ENCODE measurements at regions of chr19 and their contacts with region 1.

Region 1: GRCh38 chr19:488505-489417 is 7.5 kb upstream of the MADCAM1 start:
- DNase-seq: peak; percentile 97
- H3K4me3 Mint-ChIP-seq: peak overlapping the region; percentile 86
- H3K27ac Mint-ChIP-seq: peak overlapping the region; percentile 94
- H3K4me1 Mint-ChIP-seq: peaks cover 7% of the 10 kb centered on the region
- H3K27me3 Mint-ChIP-seq: peaks cover 5% of the 10 kb centered on the region

Region 2: DNA sequence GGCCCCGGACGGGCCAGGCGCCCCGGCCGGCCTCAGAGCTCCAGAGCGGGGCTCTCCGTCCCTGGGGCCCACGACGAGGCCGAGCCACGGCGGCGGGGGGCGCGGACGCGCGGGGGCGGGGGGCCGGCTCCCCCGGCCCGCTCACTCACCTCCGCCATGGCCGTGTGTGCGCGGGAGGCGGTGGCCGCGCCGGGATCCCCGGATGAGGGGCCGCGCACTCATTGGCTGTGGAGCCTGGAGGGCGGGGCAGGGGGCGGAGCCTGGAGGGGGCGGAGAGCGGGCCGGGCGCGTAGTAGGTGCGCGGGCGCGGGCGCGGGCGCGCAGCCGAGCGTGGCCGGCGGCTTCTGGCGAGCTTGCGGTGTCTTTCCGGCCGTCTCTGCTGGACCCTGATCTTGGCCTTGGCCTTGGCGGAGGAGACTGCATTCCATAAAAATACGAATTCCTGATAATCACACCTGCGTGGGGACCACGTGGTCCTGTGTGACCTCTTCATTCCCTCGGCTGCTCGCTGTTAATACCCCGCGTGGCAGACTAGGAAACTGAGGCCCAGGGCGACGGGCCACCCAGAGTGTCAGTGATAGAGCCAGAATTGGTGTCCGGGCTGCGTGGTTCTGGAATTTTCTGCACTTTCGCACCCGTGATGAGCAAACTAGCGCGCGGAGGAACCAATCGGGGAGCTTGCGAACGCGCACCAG is 144.0 kb before region 1 on chr19 and contains the start of gene MIER2:
- intact Hi-C with region 1: loop called (anchors 5 kb)
- DNase-seq: peak; percentile 99
- H3K4me3 Mint-ChIP-seq: peak within 1 kb of the TSS; percentile 88
- H3K27ac Mint-ChIP-seq: peak within 1 kb of the TSS; percentile 88
- H3K4me1 Mint-ChIP-seq: peaks cover 43% of the 10 kb centered on the region
- H3K27me3 Mint-ChIP-seq: peaks cover 4% of the 10 kb centered on the region
- total RNA-seq, gene MIER2: 27.6 and 32.0 TPM in 2 replicates

Region 3: GRCh38 chr19:543910-544608 is 55.3 kb after region 1 on chr19 and contains the start of gene GZMM:
- intact Hi-C with region 1: no loop called
- DNase-seq: peak; percentile 94
- H3K4me3 Mint-ChIP-seq: peak within 1 kb of the TSS; percentile 87
- H3K27ac Mint-ChIP-seq: peak within 1 kb of the TSS; percentile 88
- H3K4me1 Mint-ChIP-seq: peaks cover 18% of the 10 kb centered on the region
- H3K27me3 Mint-ChIP-seq: no peaks in the 10 kb centered on the region
- total RNA-seq, gene GZMM: 37.6 and 40.9 TPM in 2 replicates

Measured in activated CD4-positive, alpha-beta T cell treated with anti-CD3 and anti-CD28 coated beads, Interleukin-2, amount 10 ng/mL, durations not matched to agents 24 days and 14 days (primary cell).